ENCODE measurements at regions of chr7 and their contacts with region 1.

Region 1: DNA sequence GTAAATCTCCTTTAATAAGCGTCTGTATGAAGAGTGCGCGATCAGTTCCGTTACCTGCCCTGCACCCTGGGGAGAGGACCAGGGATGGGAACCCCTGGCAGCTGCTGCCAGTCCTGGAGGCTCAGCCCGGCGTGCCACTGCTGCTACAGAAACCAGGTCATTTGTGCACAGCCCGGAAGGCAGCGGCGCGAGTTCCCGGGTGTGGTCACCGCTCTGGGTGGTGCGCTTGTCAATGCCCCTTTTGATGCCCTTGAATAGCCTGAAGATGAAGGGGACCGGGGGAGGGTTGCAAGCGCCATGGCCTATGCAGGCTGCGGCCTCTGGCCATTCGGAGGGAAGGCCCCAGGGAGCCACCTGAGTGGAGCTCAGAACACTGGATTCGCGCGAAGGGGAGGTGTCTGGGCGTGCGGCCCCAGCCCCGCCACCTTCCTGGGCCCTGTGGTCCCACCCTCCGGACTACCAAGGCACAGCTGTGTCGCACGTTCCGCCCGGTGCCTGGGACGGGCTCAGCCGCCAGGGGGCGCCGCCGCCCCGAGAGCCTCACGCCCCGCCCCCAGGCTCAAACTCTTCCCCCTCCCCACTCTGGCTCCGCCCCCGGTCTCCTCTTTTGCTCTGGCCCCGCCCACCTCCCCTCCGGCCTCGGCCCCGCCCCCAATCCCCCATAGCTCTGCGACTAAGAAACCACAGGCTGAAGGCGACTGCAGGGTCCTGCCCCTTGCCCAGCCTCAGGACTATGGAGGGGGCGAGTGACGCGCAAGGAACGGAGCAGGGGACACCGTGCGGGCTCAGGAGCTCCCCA is 16.5 kb downstream of the AP5Z1 start:
- DNase-seq: peak; percentile 93
- ATAC-seq: peak; percentile 83
- H3K4me3 Mint-ChIP-seq: peak overlapping the region; percentile 54
- H3K27ac Mint-ChIP-seq: no peak overlapping the region
- H3K4me1 Mint-ChIP-seq: peaks cover 5% of the 10 kb centered on the region
- H3K27me3 Mint-ChIP-seq: no peaks in the 10 kb centered on the region
- CTCF ChIP-seq: peak; percentile 92

Region 2: DNA sequence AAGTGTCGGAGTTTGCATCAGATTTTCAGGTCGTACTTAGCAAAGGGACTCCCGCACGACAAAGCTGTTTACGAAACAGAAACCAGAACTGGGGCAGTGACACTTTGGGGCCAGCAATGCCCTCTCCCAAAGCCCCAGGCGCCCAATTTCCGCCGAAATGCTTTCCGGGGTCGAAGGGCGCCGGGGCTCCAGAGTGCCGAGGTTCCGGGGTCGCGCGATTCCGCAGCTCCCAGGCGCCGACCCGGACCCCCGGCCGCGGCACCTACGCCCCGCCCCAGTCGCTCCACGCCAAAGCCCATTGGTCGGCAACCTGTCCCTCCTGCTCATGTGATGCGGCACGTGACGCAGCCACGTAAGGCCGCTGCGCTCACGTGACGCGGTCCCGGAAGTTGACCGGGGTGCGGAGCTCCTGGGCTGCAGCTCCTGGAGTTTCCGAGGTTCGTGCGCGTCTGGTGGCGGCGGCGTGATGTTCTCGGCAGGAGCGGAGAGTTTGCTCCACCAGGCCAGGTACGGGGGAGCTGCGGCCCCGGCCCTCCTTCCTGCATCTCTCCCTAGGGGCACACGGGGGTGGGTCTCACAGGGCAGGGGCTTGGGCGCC is 16.6 kb before region 1 on chr7 and contains the start of gene AP5Z1:
- CTCF ChIA-PET with region 1: interaction called, 75 read pairs
- POLR2A ChIA-PET with region 1: interaction called, 11 read pairs
- DNase-seq: peak; percentile 94
- ATAC-seq: peak; percentile 98
- H3K4me3 Mint-ChIP-seq: peak within 1 kb of the TSS; percentile 96
- H3K27ac Mint-ChIP-seq: peak within 1 kb of the TSS; percentile 92
- H3K4me1 Mint-ChIP-seq: peaks cover 16% of the 10 kb centered on the region
- H3K27me3 Mint-ChIP-seq: no peaks in the 10 kb centered on the region; the same call in 1 of the 2 replicates
- CTCF ChIP-seq: no peak
- total RNA-seq, gene AP5Z1: 25.6 to 29.4 TPM (median 27.9 TPM) in 3 replicates

Region 3: GRCh38 chr7:4809091-4809591 is 17.2 kb after region 1 on chr7:
- CTCF ChIA-PET with region 1: interaction called, 37 read pairs
- POLR2A ChIA-PET with region 1: interaction called, 3 read pairs
- DNase-seq: no peak
- ATAC-seq: no peak
- H3K4me3 Mint-ChIP-seq: peak overlapping the region; percentile 34; the same call in 1 of the 2 replicates
- H3K27ac Mint-ChIP-seq: no peak overlapping the region
- H3K4me1 Mint-ChIP-seq: peaks cover under 1% of the 10 kb centered on the region; the same call in 1 of the 2 replicates
- H3K27me3 Mint-ChIP-seq: peaks cover 24% of the 10 kb centered on the region
- CTCF ChIP-seq: no peak

Region 4: DNA sequence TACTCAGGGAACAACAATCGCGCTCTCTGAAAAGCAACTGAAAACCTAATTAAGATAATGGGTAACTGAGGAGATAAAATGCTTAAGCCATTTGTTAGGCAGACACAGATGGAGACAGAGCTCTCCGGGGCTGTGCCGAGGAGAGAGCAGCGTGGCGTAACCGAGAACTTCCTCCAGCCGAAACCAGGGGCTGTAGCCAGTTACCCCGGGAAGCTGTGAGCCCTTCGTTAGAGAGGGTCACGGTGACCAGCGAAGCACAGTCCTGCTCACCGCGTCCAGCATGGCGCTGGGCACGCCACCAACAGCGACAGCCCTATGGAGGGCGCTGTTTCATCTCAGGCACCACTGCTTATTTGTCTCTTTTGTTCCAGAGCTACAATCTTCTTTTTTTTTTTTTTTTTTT is 53.8 kb after region 1 on chr7:
- CTCF ChIA-PET with region 1: interaction called, 23 read pairs
- POLR2A ChIA-PET with region 1: no interaction called
- DNase-seq: peak; percentile 79
- ATAC-seq: peak; percentile 96
- H3K4me3 Mint-ChIP-seq: no peak overlapping the region
- H3K27ac Mint-ChIP-seq: peak overlapping the region; percentile 49; the same call in 1 of the 2 replicates
- H3K4me1 Mint-ChIP-seq: peaks cover 7% of the 10 kb centered on the region
- H3K27me3 Mint-ChIP-seq: no peaks in the 10 kb centered on the region
- CTCF ChIP-seq: peak; percentile 43; the same call in 1 of the 2 replicates

Region 5: DNA sequence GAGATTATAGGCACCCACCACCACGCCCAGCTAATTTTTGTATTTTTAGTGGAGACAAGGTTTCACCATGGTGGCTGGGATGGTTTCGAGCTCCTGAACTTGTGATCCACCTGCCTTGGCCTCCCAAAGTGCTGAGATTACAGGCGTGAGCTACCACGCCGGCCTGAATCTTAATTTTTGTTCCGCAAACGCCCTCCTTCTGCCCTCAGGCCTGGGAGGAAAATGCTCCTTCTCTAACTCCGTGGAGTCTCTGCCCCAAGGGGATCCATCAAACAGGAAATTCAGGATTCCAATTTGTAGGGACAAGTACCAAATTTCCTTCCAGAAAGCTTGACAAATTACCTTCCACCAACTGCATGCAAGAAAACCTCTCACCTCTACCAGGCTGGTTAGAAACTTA is 297.0 kb after region 1 on chr7:
- CTCF ChIA-PET with region 1: interaction called, 27 read pairs
- POLR2A ChIA-PET with region 1: no interaction called
- DNase-seq: no peak
- ATAC-seq: no peak
- H3K4me3 Mint-ChIP-seq: peak overlapping the region; percentile 6; the same call in 1 of the 2 replicates
- H3K27ac Mint-ChIP-seq: peak overlapping the region; percentile 23; the same call in 1 of the 2 replicates
- H3K4me1 Mint-ChIP-seq: peaks cover 6% of the 10 kb centered on the region; the same call in 1 of the 2 replicates
- H3K27me3 Mint-ChIP-seq: peaks cover 25% of the 10 kb centered on the region
- CTCF ChIP-seq: no peak